Common myeloid progenitor, CD34-positive (primary cell): ENCODE measurements at regions of chr12 and their contacts with region 1.

Region 1: DNA sequence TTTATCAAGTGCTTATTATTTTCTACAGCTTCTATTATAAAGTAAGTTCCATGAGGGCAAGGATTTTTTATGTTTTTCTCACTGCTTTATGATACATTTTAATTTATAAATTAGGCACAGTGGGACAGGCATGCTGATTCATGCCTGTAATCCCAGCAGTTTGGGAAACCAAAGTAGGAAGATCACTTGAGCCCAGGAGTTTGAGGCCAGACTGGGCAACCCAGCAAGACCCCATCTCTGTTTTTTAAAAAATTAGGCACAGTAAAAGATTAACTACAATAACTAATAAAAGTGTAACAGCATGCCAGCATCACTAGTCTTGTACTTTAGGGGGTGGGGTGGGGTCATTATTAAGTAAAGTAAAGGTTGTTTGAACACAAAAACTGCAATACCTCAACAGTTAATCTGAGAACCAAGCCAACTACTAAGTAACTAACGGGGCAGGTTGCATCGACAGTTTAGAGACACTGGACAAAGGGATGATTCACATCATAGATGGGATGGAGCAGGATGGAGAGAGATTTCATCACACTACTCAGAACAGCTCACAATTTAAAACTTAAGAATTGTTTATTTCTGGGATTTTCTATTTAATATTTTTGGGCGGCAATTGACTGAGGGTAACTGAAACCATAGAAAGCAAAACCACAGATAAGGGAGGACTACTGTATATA is 119.5 kb downstream of the PLEKHA5 start:
- DNase-seq: no peak
- H3K4me3 ChIP-seq: no peak overlapping the region
- H3K27ac ChIP-seq: no peak overlapping the region
- H3K4me1 ChIP-seq: peaks cover 10 to 20% (median 16%) of the 10 kb centered on the region in 4 experiments
- H3K27me3 ChIP-seq: no peaks in the 10 kb centered on the region

Region 2: GRCh38 chr12:19201661-19202060 is 47.4 kb before region 1 on chr12:
- CTCF ChIA-PET with region 1: no interaction called
- POLR2A ChIA-PET with region 1: no interaction called
- DNase-seq: no peak
- H3K4me3 ChIP-seq: no peak overlapping the region
- H3K27ac ChIP-seq: no peak overlapping the region
- H3K4me1 ChIP-seq: no peaks in the 10 kb centered on the region
- H3K27me3 ChIP-seq: no peaks in the 10 kb centered on the region

Region 3: GRCh38 chr12:19260135-19260534 is 11.1 kb after region 1 on chr12:
- CTCF ChIA-PET with region 1: interaction called, 12 read pairs
- POLR2A ChIA-PET with region 1: no interaction called
- DNase-seq: no peak
- H3K4me3 ChIP-seq: no peak overlapping the region
- H3K27ac ChIP-seq: no peak overlapping the region
- H3K4me1 ChIP-seq: no peaks in the 10 kb centered on the region
- H3K27me3 ChIP-seq: no peaks in the 10 kb centered on the region